Activated CD4-positive, alpha-beta memory T cell treated with anti-CD3 and anti-CD28 coated beads for 36 hours (primary cell): ENCODE measurements at regions of chr2 and their contacts with region 1.

Region 1: DNA sequence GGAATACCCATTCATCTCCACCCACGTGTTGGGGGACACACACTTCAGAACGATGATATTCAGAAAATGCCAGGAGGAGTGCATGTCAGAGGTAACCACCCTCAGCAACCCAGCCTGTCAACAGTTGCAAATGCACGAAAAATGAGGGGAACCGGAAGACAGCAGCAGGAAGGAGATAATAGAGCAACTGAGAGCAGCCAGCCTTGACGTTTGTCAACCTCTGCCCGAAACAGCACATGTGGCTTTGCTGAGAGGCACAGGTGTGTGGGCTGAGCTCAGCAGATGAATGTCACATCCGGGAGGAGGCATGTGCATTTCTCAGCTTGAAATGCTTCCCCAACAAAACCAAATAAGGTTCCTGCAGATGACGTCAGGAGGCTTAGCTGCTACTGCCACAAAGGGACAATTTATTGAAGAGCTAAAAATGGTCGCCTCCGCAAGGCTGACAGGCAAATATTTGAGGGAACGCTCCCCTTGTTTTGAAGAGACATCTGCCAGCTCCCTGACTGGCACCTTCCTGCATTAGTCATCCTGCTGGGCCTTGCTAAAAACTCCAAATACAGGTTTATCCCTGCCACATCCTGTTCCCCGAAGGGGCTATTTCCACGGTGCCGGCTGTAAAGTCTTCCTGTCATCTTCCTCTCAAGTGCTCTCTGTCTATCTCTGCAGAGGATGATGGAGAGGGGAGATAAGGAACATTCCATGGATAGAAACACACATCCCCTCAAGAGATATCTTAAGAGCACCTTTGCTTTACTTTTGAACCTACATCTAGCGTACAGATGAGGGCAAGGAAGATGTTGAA is 418.9 kb downstream of the NBAS start:
- DNase-seq: peak; percentile 89
- H3K4me3 Mint-ChIP-seq: peak overlapping the region; percentile 52
- H3K27ac Mint-ChIP-seq: peak overlapping the region; percentile 83
- H3K4me1 Mint-ChIP-seq: peaks cover 28% of the 10 kb centered on the region
- H3K27me3 Mint-ChIP-seq: no peaks in the 10 kb centered on the region

Region 2: GRCh38 chr2:14182227-14182946 is 959.9 kb before region 1 on chr2:
- CTCF ChIA-PET with region 1: no interaction called
- POLR2A ChIA-PET with region 1: no interaction called
- intact Hi-C with region 1: no loop called
- DNase-seq: no peak
- H3K4me3 Mint-ChIP-seq: no peak overlapping the region
- H3K27ac Mint-ChIP-seq: no peak overlapping the region
- H3K4me1 Mint-ChIP-seq: no peaks in the 10 kb centered on the region
- H3K27me3 Mint-ChIP-seq: no peaks in the 10 kb centered on the region

Region 3: GRCh38 chr2:15591692-15592463 is 449.6 kb after region 1 on chr2 and contains the start of gene DDX1:
- CTCF ChIA-PET with region 1: no interaction called
- POLR2A ChIA-PET with region 1: no interaction called
- intact Hi-C with region 1: loop called (anchors 1 kb)
- DNase-seq: peak; percentile 91
- H3K4me3 Mint-ChIP-seq: peak within 1 kb of the TSS; percentile 94
- H3K27ac Mint-ChIP-seq: peak within 1 kb of the TSS; percentile 91
- H3K4me1 Mint-ChIP-seq: peaks cover 29% of the 10 kb centered on the region
- H3K27me3 Mint-ChIP-seq: no peaks in the 10 kb centered on the region
- total RNA-seq, gene DDX1: 79.7 to 81.1 TPM